Esophagus muscularis mucosa (tissue), 4 donors: ENCODE measurements at regions of chr14 and their contacts with region 1.

Region 1: DNA sequence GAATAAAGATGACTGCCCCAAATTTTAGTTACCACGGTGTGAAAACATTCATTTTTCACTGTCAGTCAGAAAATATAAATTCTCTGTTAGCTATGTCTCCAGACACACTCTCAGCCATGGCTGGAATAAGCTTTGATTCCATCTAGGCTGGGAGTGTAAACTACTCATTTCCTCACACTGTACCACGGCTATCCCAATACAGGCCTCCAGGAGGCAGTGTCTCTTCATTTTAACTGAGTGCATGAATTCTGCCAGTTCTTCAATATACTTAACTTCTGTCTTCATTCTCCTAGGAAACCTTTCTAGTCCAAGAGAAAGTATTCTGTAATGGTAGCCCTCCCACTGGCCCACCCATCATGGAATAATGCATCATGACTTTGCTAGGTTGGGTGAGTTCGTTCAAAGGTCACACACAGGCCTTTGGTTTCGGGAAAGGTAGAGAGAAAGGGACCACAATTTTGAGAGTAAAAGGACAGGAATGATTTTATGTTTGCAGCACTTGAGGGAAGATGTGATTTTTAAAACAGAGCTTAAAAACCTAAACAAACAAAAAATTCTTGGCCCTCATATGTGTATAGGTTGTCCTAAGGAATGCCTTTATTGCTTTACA is 381.1 kb downstream of the SEC23A start:
- DNase-seq: no peak
- H3K4me3 ChIP-seq: no peak overlapping the region
- H3K27ac ChIP-seq: no peak overlapping the region
- H3K4me1 ChIP-seq: peaks cover 0 to 10% (median 5%) of the 10 kb centered on the region in 4 donors
- H3K27me3 ChIP-seq: no peaks in the 10 kb centered on the region
- CTCF ChIP-seq: peak; percentile 82 to 86 (median 82)
- EP300 ChIP-seq: no peak
- POLR2A ChIP-seq: no peak

Region 2: DNA sequence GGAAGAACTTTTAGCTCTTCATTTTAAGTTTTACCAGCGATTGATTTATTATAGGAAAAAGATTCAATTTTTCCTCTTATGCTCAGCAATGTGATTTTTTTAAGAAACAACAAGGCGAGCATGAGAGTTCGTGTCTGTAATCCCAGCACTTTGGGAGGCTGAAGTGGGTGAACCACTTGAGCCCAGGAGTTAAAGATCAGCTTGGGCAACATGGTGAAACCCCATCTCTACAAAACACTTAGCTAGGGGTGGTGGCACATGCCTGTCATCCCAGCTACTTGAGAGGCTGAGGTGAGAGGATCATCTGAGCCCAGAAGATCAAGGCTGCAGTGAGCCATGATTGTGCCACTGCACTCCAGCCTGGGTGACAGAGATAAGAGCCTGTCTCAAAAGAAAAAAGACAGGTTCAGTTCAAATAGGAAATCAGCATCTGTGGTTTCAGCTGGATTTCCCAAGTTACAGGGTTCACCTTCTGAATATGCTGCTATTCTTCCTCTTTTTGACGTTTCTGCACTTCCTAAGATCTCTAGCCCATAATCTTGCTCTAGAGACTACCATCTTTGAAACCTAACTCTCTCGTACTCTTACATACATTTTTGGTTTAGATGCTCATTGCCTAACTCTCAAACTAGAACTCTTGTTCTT is 106.4 kb after region 1 on chr14:
- intact Hi-C with region 1: no loop called
- DNase-seq: no peak
- H3K4me3 ChIP-seq: no peak overlapping the region
- H3K27ac ChIP-seq: no peak overlapping the region
- H3K4me1 ChIP-seq: peaks cover 0 to 12% (median 8%) of the 10 kb centered on the region in 4 donors
- H3K27me3 ChIP-seq: no peaks in the 10 kb centered on the region
- CTCF ChIP-seq: no peak
- EP300 ChIP-seq: no peak
- POLR2A ChIP-seq: no peak

Region 3: DNA sequence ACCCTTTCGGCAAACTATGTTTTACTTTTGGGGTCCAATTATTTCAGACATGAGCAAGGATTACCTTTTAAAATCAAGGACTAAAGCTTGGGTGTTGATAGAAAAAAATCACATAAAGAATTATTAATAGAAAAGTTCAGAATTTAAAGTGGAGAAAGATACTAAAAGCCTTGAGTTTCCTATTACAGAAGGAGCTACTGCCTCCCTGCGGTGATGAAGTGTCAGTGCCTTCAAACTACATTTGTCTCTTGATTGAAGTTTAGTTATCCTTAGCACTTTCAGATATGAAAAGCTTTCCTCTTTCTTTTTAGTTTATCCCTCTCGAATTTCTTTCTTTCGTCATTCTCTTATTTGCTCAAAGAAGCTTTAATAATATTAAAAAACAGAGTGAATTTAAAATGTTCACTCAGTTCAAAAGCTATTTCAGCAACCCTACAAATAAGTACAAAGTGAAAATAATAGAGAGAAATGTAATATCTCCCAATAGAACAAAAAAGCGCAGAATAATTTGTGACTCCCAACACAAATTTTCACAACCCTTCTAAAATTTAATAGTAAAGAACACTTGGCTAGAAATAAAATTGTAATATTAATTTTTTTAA is 293.5 kb after region 1 on chr14:
- intact Hi-C with region 1: loop called (anchors 2 kb)
- DNase-seq: no peak
- H3K4me3 ChIP-seq: no peak overlapping the region
- H3K27ac ChIP-seq: no peak overlapping the region
- H3K4me1 ChIP-seq: no peaks in the 10 kb centered on the region
- H3K27me3 ChIP-seq: no peaks in the 10 kb centered on the region
- CTCF ChIP-seq: peak; percentile 64 to 74 (median 65)
- EP300 ChIP-seq: no peak
- POLR2A ChIP-seq: no peak